Activated CD4-positive, alpha-beta T cell treated with anti-CD3 and anti-CD28 coated beads for 36 hours (primary cell): ENCODE measurements at regions of chr1 and their contacts with region 1.

Region 1: GRCh38 chr1:247407180-247407616 is 8.8 kb upstream of the NLRP3 start:
- DNase-seq: peak; percentile 84
- ATAC-seq: peak; percentile 85
- H3K4me3 Mint-ChIP-seq: peak overlapping the region; percentile 24
- H3K27ac Mint-ChIP-seq: peak overlapping the region; percentile 72
- H3K4me1 Mint-ChIP-seq: peaks cover 41% of the 10 kb centered on the region
- H3K27me3 Mint-ChIP-seq: peaks cover 2% of the 10 kb centered on the region

Region 2: GRCh38 chr1:247078261-247079140 is 328.7 kb before region 1 on chr1 and contains the start of gene ZNF670:
- CTCF ChIA-PET with region 1: no interaction called
- POLR2A ChIA-PET with region 1: no interaction called
- intact Hi-C with region 1: loop called in 1 of 2 experiments (anchors 1 kb)
- DNase-seq: peak; percentile 97
- ATAC-seq: peak; percentile 100
- H3K4me3 Mint-ChIP-seq: peak within 1 kb of the TSS; percentile 89
- H3K27ac Mint-ChIP-seq: peak within 1 kb of the TSS; percentile 91
- H3K4me1 Mint-ChIP-seq: peaks cover 27% of the 10 kb centered on the region
- H3K27me3 Mint-ChIP-seq: peaks cover 5% of the 10 kb centered on the region
- total RNA-seq, gene ZNF670: 4.3 to 4.9 TPM

Region 3: DNA sequence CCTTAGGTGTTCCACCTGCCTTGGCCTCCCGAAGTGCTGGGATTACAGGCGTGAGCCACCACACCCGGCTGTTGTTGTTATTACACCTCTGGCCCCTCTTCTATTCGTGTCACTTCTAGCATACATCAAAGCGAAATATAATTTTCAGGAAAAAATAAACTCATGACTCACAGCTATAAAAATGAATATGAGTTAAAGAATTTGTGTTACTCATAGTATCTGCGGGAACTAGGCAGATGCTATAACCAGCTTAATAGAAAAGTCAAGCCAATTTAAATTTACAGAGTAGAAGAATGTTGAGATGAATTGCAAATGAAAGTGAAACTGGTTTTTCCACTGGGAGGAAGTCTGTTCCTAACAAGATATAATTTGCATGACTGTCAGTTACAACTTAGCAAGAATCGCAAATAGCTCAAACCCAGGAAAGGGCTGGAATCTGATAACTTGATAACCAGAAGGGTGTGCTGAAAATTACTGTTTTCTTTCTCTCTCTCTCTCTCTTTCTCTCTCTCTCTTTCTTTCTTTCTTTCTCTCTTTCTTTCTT is 499.4 kb after region 1 on chr1:
- CTCF ChIA-PET with region 1: no interaction called
- POLR2A ChIA-PET with region 1: no interaction called
- intact Hi-C with region 1: loop called in 1 of 2 experiments (anchors 5 kb)
- DNase-seq: peak; percentile 50
- ATAC-seq: peak; percentile 93
- H3K4me3 Mint-ChIP-seq: peak overlapping the region; percentile 53
- H3K27ac Mint-ChIP-seq: peak overlapping the region; percentile 61
- H3K4me1 Mint-ChIP-seq: peaks cover 33% of the 10 kb centered on the region
- H3K27me3 Mint-ChIP-seq: no peaks in the 10 kb centered on the region